WTC11 (cell line): ENCODE measurements at regions of chr9 and their contacts with region 1.

Region 1: DNA sequence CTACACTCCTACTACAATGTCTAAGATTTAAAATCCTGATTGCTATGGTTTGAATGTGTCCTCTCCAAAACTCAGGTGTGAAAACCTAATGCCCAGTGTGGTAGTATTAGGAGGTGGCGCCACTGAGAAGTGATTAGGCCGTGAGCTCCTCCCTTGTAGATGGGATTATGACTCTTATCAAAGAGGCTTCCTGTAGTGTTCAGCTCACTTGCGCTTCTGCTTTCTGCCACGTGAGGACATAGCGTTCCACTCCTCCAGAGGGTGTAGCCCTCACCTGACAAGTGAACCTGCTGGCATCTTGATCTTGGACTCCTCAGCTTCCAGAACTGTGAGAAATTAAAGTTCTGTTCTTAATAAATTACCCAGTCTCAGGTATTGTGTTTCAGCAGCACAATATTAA is 33.0 kb upstream of the WHRN start:
- DNase-seq: peak; percentile 46
- ATAC-seq: peak; percentile 100
- H3K4me3 Mint-ChIP-seq: no peak overlapping the region
- H3K27ac Mint-ChIP-seq: 0 out of 2 replicates have a peak overlapping the region, but pooled peaks have one; percentile 15
- H3K4me1 Mint-ChIP-seq: peaks cover 9% of the 10 kb centered on the region
- H3K27me3 Mint-ChIP-seq: no peaks in the 10 kb centered on the region
- CTCF ChIP-seq: no peak

Region 2: GRCh38 chr9:114299286-114300152 is 238.7 kb before region 1 on chr9:
- CTCF ChIA-PET with region 1: no interaction called
- POLR2A ChIA-PET with region 1: no interaction called
- DNase-seq: no peak
- ATAC-seq: no peak
- H3K4me3 Mint-ChIP-seq: no peak overlapping the region
- H3K27ac Mint-ChIP-seq: no peak overlapping the region
- H3K4me1 Mint-ChIP-seq: no peaks in the 10 kb centered on the region
- H3K27me3 Mint-ChIP-seq: no peaks in the 10 kb centered on the region
- CTCF ChIP-seq: no peak

Region 3: GRCh38 chr9:114518599-114519022 is 19.6 kb before region 1 on chr9:
- CTCF ChIA-PET with region 1: interaction called, 13 read pairs
- POLR2A ChIA-PET with region 1: interaction called, 6 read pairs
- DNase-seq: no peak
- ATAC-seq: peak; percentile 67
- H3K4me3 Mint-ChIP-seq: no peak overlapping the region
- H3K27ac Mint-ChIP-seq: no peak overlapping the region
- H3K4me1 Mint-ChIP-seq: peaks cover 4% of the 10 kb centered on the region; the same call in 1 of the 2 replicates
- H3K27me3 Mint-ChIP-seq: peaks cover 33% of the 10 kb centered on the region
- CTCF ChIP-seq: no peak

Region 4: GRCh38 chr9:114549697-114550330 is 11.6 kb after region 1 on chr9:
- CTCF ChIA-PET with region 1: interaction called, 16 read pairs
- POLR2A ChIA-PET with region 1: no interaction called
- DNase-seq: no peak
- ATAC-seq: no peak
- H3K4me3 Mint-ChIP-seq: no peak overlapping the region
- H3K27ac Mint-ChIP-seq: no peak overlapping the region
- H3K4me1 Mint-ChIP-seq: peaks cover 12% of the 10 kb centered on the region
- H3K27me3 Mint-ChIP-seq: peaks cover 3% of the 10 kb centered on the region; the same call in 1 of the 2 replicates
- CTCF ChIP-seq: no peak